HAP-1 (cell line): ENCODE measurements at regions of chr1 and their contacts with region 1.

Region 1: DNA sequence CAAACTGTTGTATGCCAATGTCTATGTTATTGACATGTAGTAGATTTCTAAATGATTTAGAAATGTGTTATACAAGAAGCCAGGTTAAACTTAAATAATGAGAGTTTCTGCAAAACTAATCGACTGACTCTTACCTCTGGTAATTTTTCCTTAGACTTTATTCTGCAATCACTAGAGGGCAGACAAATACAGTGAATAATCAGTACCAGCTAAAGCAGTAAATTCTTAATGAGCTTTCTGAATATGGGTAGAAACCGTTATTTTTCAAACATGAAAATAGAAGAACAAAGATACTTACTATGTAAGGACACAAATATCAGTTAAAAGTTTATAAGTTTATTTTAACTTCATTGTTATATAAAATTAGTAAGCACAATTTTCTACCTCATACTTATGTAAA is 97.9 kb upstream of the RGS1 start:
- DNase-seq: peak in 1 of 2 experiments; percentile 65
- H3K4me3 ChIP-seq: no peak overlapping the region
- H3K4me1 ChIP-seq: no peaks in the 10 kb centered on the region
- H3K27me3 ChIP-seq: peaks cover 6% of the 10 kb centered on the region; the same call in 1 of the 2 replicates

Region 2: DNA sequence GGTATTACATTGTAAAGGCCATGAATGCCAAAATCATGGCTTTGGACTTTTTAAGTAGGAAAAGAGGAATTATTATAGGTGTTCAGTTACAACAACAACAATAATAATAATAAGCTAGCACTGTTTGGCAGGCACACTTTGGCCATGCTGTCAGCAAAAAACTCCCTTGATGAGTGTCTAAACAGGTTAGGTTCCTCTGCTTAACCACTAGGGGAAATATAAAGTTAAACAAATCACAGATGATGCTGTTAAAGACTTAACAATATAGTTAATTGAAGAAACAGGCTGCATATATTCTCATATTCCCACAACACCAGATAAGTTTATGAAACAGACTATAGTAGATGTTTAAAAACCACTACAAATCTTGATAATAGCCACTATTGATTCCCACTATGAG is 114.5 kb before region 1 on chr1:
- in situ Hi-C with region 1: no loop called
- DNase-seq: no peak
- H3K4me3 ChIP-seq: no peak overlapping the region
- H3K4me1 ChIP-seq: no peaks in the 10 kb centered on the region
- H3K27me3 ChIP-seq: no peaks in the 10 kb centered on the region

Region 3: DNA sequence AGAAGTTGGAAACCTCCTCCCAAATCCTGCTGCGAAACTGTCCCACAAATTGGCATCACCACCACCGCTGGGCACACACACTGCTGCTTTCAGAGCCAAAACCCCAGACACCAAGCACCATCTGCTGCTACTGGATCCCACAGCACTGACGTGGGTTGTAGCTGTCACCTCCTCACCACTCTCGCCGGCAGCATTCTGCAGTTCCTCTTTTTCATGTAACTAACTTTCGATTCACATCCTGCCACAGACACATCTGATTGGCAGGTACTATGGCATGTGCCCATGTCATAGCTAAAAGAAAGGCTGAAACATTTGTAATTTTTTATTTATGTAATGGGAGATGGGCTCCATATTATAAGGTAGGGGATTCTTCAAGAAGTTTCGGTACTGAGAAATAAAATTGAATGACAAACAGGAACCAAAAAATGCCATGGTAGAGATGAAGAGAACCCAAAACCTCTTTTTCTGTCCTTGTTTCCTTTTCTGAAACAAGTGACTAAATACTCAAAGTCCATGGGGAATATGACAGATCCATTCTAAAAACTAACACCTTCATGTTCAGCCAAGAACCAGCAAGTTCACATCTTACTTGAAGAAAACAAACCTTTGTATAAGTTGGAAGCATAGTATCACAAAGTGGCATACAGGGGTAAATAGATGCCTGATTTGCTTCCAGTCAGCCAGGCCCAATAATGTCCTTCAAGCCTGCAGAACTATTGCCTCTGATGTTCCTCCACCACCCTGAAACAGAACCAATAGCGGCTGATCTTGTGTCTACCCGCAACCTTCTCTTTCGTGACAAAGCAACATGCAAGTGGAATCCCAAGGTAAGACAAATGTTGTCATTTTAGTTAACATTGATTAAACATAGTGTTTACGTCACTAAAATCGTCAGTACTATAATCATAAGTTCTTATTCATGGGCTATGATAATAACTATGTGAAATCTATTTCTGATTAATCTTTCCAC is 131.8 kb after region 1 on chr1:
- in situ Hi-C with region 1: loop called (anchors 5 kb)
- DNase-seq: no peak
- H3K4me3 ChIP-seq: no peak overlapping the region
- H3K4me1 ChIP-seq: no peaks in the 10 kb centered on the region
- H3K27me3 ChIP-seq: no peaks in the 10 kb centered on the region

Region 4: GRCh38 chr1:193013005-193013404 is 535.4 kb after region 1 on chr1:
- in situ Hi-C with region 1: loop called (anchors 5 kb)
- DNase-seq: no peak
- H3K4me3 ChIP-seq: no peak overlapping the region
- H3K4me1 ChIP-seq: peaks cover 18% of the 10 kb centered on the region
- H3K27me3 ChIP-seq: no peaks in the 10 kb centered on the region